Adrenal gland (tissue), 19 donors: ENCODE measurements at regions of chr20 and their contacts with region 1.

Region 1: DNA sequence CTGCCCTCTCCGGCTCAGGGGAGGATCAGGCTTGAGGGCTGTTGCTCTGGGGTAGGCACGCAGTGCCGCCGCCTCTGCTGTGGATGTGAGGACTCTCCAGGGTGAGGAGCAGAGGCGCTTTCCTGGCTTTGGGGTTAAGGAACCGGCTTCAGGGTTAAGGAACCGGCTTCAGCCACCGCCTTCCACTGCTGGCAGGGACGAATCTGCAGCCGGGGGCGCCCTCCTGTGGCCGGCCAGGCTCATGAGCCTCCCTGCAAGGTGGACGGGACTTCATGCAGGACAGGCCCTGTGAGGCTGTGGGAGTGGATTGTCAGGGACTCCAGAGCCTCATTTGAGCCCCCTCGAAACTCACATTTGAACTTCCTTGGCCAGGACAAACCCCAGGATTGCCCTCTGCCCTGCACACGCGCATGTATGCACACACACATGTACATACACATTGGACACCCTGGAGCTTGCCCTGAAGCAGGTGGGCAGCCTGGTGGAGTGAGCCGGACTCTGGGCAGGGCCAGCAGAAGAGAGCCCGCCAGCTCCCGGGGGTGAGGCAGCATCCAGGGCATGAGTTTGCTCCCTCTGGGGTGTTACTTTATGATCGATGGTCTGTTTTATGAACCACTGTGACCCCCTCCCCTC is 146.8 kb downstream of the PHACTR3 start:
- DNase-seq: peak; percentile 60 to 87 (median 76)
- H3K4me3 ChIP-seq: no peak overlapping the region
- H3K27ac ChIP-seq: no peak overlapping the region
- H3K4me1 ChIP-seq: peaks cover 0 to 6% of the 10 kb centered on the region in 2 donors
- H3K27me3 ChIP-seq: peaks cover 38% of the 10 kb centered on the region
- CTCF ChIP-seq: peak; percentile 56 to 86 (median 74)
- POLR2A ChIP-seq: no peak

Region 2: GRCh38 chr20:59571551-59572314 is 179.4 kb before region 1 on chr20:
- intact Hi-C with region 1: loop called in 1 of 2 experiments (anchors 2 kb)
- DNase-seq: peak; percentile 36 to 70 (median 62)
- H3K4me3 ChIP-seq: peak overlapping the region in 2 of 4 donors; percentile 17 to 66
- H3K27ac ChIP-seq: peak overlapping the region in 2 of 5 donors; percentile 60 to 79
- H3K4me1 ChIP-seq: peaks cover 0 to 7% of the 10 kb centered on the region in 2 donors
- H3K27me3 ChIP-seq: peaks cover 10% of the 10 kb centered on the region
- CTCF ChIP-seq: peak; percentile 68 to 97 (median 79)
- POLR2A ChIP-seq: no peak

Region 3: GRCh38 chr20:59598625-59599310 is 152.4 kb before region 1 on chr20:
- intact Hi-C with region 1: loop called in 1 of 2 experiments (anchors 2 kb)
- DNase-seq: peak in 6 of 7 donors; percentile 17 to 57 (median 44)
- H3K4me3 ChIP-seq: no peak overlapping the region
- H3K27ac ChIP-seq: no peak overlapping the region
- H3K4me1 ChIP-seq: no peaks in the 10 kb centered on the region
- H3K27me3 ChIP-seq: peaks cover 11% of the 10 kb centered on the region
- CTCF ChIP-seq: peak; percentile 55 to 76 (median 69)
- POLR2A ChIP-seq: no peak